ENCODE measurements at regions of chr2 and their contacts with region 1.

Region 1: DNA sequence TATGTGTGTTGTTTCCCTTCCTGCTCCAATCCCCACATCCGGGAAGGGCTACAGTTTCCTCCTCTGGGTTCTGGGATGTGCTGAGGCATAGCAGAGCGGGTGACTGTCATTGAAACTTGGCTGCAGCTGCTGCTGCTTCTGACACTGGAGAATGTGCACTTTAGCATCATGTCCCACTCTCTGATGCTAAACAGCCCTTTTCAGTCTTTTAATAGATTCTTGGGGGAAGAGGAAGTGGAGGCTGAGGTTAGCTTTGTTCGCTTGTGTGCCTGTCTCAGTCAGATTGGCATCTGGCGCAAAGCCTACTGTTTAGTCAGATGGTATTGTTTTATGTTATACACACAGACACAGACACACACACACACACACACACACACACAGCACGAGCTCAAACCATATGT is 136.5 kb upstream of the RND3 start:
- DNase-seq: no peak
- ATAC-seq: no peak
- H3K4me3 ChIP-seq: no peak overlapping the region
- H3K27ac ChIP-seq: peak overlapping the region; percentile 38; the same call in 1 of the 2 replicates
- H3K4me1 ChIP-seq: peaks cover 18% of the 10 kb centered on the region
- H3K27me3 ChIP-seq: no peaks in the 10 kb centered on the region
- CTCF ChIP-seq: no peak
- POLR2A ChIP-seq: no peak
- RAD21 ChIP-seq: no peak

Region 2: DNA sequence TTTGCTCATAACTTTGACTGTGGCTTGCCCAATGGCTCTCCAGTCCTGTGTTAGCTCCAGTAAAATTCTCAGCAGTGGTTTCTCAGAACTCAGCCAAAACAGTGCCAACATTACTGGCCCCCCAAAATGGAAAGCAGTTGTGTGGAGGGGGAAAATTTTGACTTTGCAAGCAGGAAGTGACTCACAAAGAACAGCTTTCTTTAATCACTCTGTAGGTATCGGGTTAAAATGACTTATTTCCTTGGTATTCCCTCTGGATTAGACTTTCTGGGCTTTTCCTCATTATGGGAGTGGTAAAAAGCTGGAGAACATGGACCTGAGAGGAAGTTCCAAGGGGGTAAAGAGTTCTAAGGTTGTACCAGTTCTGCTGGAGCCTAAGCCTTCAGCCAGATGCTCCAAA is 39.1 kb after region 1 on chr2:
- CTCF ChIA-PET with region 1: no interaction called
- POLR2A ChIA-PET with region 1: no interaction called
- dilution Hi-C with region 1: no loop called
- in situ Hi-C with region 1: no loop called
- intact Hi-C with region 1: loop called (anchors 2 kb)
- DNase-seq: peak; percentile 90
- ATAC-seq: peak; percentile 92
- H3K4me3 ChIP-seq: no peak overlapping the region
- H3K27ac ChIP-seq: peak overlapping the region; percentile 96
- H3K4me1 ChIP-seq: peaks cover 5% of the 10 kb centered on the region
- H3K27me3 ChIP-seq: no peaks in the 10 kb centered on the region
- CTCF ChIP-seq: no peak
- POLR2A ChIP-seq: no peak
- RAD21 ChIP-seq: no peak

Region 3: GRCh38 chr2:150787353-150788093 is 163.5 kb after region 1 on chr2:
- CTCF ChIA-PET with region 1: no interaction called
- POLR2A ChIA-PET with region 1: no interaction called
- dilution Hi-C with region 1: no loop called
- in situ Hi-C with region 1: no loop called
- intact Hi-C with region 1: loop called (anchors 10 kb)
- DNase-seq: no peak
- ATAC-seq: no peak; the same call in 1 of the 2 replicates
- H3K4me3 ChIP-seq: no peak overlapping the region
- H3K27ac ChIP-seq: no peak overlapping the region; the same call in 1 of the 2 replicates
- H3K4me1 ChIP-seq: peaks cover 3% of the 10 kb centered on the region; the same call in 1 of the 2 replicates
- H3K27me3 ChIP-seq: no peaks in the 10 kb centered on the region
- CTCF ChIP-seq: no peak
- POLR2A ChIP-seq: no peak
- RAD21 ChIP-seq: no peak

Region 4: GRCh38 chr2:150878356-150878755 is 254.4 kb after region 1 on chr2:
- CTCF ChIA-PET with region 1: no interaction called
- POLR2A ChIA-PET with region 1: no interaction called
- dilution Hi-C with region 1: no loop called
- in situ Hi-C with region 1: no loop called
- intact Hi-C with region 1: loop called (anchors 10 kb)
- DNase-seq: peak; percentile 52
- ATAC-seq: no peak
- H3K4me3 ChIP-seq: no peak overlapping the region
- H3K27ac ChIP-seq: no peak overlapping the region
- H3K4me1 ChIP-seq: peaks cover 9% of the 10 kb centered on the region
- H3K27me3 ChIP-seq: no peaks in the 10 kb centered on the region
- CTCF ChIP-seq: no peak
- POLR2A ChIP-seq: no peak
- RAD21 ChIP-seq: no peak

Measured in IMR-90 (cell line).